Heart right ventricle (tissue), 16 donors: ENCODE measurements at regions of chr9 and their contacts with region 1.

Region 1: DNA sequence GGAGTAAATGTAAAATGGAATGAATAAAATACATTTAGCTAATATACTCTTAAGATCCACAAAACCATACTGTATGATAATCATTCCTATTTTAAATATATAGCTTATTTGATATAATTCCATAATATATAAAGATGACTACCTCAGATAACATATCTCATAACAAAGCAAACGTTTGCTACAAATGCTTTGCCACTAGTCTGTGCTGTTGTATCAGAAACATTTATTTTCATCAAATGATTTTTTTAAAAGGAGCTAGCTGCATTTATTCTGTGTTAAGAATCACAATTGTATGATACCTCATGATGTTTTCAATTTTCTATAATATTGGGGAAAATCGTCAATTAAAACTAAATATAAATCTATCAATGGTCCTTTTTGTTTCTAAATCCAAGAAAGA is 567.2 kb downstream of the PTPRD start:
- DNase-seq: no peak
- ATAC-seq: no peak
- H3K4me3 ChIP-seq: no peak overlapping the region
- H3K27ac ChIP-seq: no peak overlapping the region
- H3K4me1 ChIP-seq: no peaks in the 10 kb centered on the region
- H3K27me3 ChIP-seq: no peaks in the 10 kb centered on the region
- CTCF ChIP-seq: peak in 7 of 9 donors; percentile 31 to 60 (median 44)

Region 2: DNA sequence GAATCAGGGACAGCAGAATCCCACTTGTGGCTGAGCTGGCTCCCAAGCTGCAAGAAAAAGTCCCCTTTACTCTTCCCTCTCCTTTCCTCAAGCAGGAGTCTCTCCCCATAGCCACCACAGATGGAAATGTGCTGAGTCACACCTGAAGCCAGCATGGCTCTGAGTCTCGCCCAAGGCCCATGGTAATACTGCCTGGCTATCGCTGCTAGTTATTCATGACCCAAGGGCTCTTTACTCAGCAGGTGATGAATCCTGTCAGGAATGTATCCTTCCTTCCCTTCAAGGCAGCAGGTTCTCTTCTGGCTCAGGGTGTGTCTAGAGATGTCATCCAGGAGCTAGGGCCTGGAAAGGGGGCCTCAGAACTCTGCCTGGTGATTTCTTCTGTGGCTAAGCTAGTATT is 970.5 kb after region 1 on chr9:
- intact Hi-C with region 1: no loop called
- DNase-seq: no peak
- ATAC-seq: no peak
- H3K4me3 ChIP-seq: no peak overlapping the region
- H3K27ac ChIP-seq: no peak overlapping the region
- H3K4me1 ChIP-seq: no peaks in the 10 kb centered on the region
- H3K27me3 ChIP-seq: no peaks in the 10 kb centered on the region
- CTCF ChIP-seq: no peak

Region 3: DNA sequence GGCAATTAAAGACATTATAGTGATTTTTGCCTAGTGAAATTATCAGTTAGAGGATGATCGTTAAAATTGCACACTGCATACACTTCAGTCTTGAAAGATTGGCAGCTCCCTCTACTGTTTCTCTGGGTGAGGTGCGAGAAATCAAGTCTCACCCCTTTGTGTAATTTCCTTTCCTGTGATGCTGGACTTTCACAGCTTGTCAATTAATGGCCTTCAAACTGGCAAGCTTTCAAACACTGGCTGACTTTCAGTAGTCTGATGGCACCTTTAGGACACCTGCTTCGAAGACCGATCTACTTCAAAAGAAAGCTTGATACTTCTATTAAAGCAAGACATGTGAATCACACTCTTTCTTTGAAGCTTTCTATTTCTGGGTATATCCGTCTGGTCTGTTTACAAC is 1273.9 kb after region 1 on chr9:
- intact Hi-C with region 1: loop called in 1 of 10 experiments (anchors 10 kb)
- DNase-seq: no peak
- ATAC-seq: no peak
- H3K4me3 ChIP-seq: no peak overlapping the region
- H3K27ac ChIP-seq: no peak overlapping the region
- H3K4me1 ChIP-seq: no peaks in the 10 kb centered on the region
- H3K27me3 ChIP-seq: no peaks in the 10 kb centered on the region
- CTCF ChIP-seq: peak in 7 of 9 donors; percentile 24 to 51 (median 32)